Naive thymus-derived CD4-positive, alpha-beta T cell (primary cell): ENCODE measurements at regions of chr2 and their contacts with region 1.

Region 1: GRCh38 chr2:113248997-113249770 is 29.5 kb downstream of the PAX8 start:
- DNase-seq: peak; percentile 53 to 84 (median 71)
- ATAC-seq: peak; percentile 81
- H3K4me3 ChIP-seq: no peak overlapping the region
- H3K4me3 Mint-ChIP-seq: peak overlapping the region in 5 of 10 donors; percentile 3 to 63 (median 33)
- H3K27ac ChIP-seq: peak overlapping the region; percentile 6
- H3K27ac Mint-ChIP-seq: peak overlapping the region; percentile 43 to 94 (median 87)
- H3K4me1 ChIP-seq: peaks cover 40 to 46% of the 10 kb centered on the region in 2 donors
- H3K4me1 Mint-ChIP-seq: peaks cover 32 to 58% (median 51%) of the 10 kb centered on the region in 7 donors
- H3K27me3 ChIP-seq: no peaks in the 10 kb centered on the region
- H3K27me3 Mint-ChIP-seq: no peaks in the 10 kb centered on the region

Region 2: DNA sequence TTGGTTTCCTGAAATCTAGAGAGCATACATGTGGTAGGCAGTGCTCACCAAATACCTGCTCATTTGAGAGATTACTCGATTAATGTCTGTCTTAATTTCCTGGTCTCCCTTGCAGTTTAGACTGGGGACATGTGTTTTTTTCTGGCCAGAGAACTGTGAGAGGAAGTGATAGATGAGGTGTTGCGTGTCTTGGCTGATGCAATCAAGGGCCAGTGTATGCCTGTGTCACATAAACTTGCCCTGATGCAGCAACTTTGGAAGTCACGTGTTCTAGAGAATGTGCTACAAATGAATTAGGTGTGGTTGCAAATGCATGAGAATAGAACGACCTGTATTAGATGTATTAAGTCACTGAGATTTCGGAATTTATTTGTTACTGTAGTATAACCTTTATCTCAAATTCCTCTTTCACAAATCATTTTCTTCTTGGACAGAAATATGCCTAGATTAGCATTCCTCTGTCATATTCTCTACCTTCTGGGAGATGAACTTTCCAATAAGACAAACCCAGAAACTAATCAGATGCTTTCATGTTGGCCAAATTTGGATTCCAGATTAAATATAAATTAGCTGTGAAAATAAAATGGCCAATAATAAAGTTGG is 455.0 kb before region 1 on chr2:
- CTCF ChIA-PET with region 1: no interaction called
- POLR2A ChIA-PET with region 1: no interaction called
- intact Hi-C with region 1: no loop called
- DNase-seq: no peak
- ATAC-seq: peak; percentile 79
- H3K4me3 ChIP-seq: no peak overlapping the region
- H3K4me3 Mint-ChIP-seq: peak overlapping the region in 1 of 10 donors; percentile 35
- H3K27ac ChIP-seq: no peak overlapping the region
- H3K27ac Mint-ChIP-seq: peak overlapping the region in 1 of 9 donors; percentile 44
- H3K4me1 ChIP-seq: no peaks in the 10 kb centered on the region
- H3K4me1 Mint-ChIP-seq: peaks cover 0 to 28% (median 0%) of the 10 kb centered on the region in 7 donors
- H3K27me3 ChIP-seq: no peaks in the 10 kb centered on the region
- H3K27me3 Mint-ChIP-seq: peaks cover 0 to 10% (median 0%) of the 10 kb centered on the region in 5 donors

Region 3: GRCh38 chr2:113370478-113371091 is 121.4 kb after region 1 on chr2:
- CTCF ChIA-PET with region 1: interaction called, 16 read pairs
- POLR2A ChIA-PET with region 1: interaction called, 4 read pairs
- intact Hi-C with region 1: loop called (anchors 1 kb)
- DNase-seq: peak; percentile 27 to 82 (median 68)
- ATAC-seq: peak; percentile 91
- H3K4me3 ChIP-seq: no peak overlapping the region
- H3K4me3 Mint-ChIP-seq: no peak overlapping the region
- H3K27ac ChIP-seq: no peak overlapping the region
- H3K27ac Mint-ChIP-seq: peak overlapping the region in 3 of 9 donors; percentile 1 to 90 (median 40)
- H3K4me1 ChIP-seq: no peaks in the 10 kb centered on the region
- H3K4me1 Mint-ChIP-seq: peaks cover 0 to 18% (median 6%) of the 10 kb centered on the region in 7 donors
- H3K27me3 ChIP-seq: no peaks in the 10 kb centered on the region
- H3K27me3 Mint-ChIP-seq: peaks cover 0 to 16% (median 6%) of the 10 kb centered on the region in 5 donors

Region 4: GRCh38 chr2:113390124-113390849 is 141.1 kb after region 1 on chr2:
- CTCF ChIA-PET with region 1: interaction called, 5 read pairs
- POLR2A ChIA-PET with region 1: no interaction called
- intact Hi-C with region 1: loop called (anchors 5 kb)
- DNase-seq: peak in 8 of 9 donors; percentile 28 to 85 (median 82)
- ATAC-seq: peak; percentile 99
- H3K4me3 ChIP-seq: peak overlapping the region; percentile 73
- H3K4me3 Mint-ChIP-seq: peak overlapping the region; percentile 57 to 89 (median 77)
- H3K27ac ChIP-seq: no peak overlapping the region
- H3K27ac Mint-ChIP-seq: peak overlapping the region; percentile 22 to 84 (median 68)
- H3K4me1 ChIP-seq: no peaks in the 10 kb centered on the region
- H3K4me1 Mint-ChIP-seq: peaks cover 9 to 20% (median 16%) of the 10 kb centered on the region in 7 donors
- H3K27me3 ChIP-seq: no peaks in the 10 kb centered on the region
- H3K27me3 Mint-ChIP-seq: peaks cover 6 to 38% (median 11%) of the 10 kb centered on the region in 5 donors